Activated CD8-positive, alpha-beta memory T cell treated with anti-CD3 and anti-CD28 coated beads, Interleukin-2, amount 10 ng/mL, durations not matched to agents 7 days and 5 days (primary cell): ENCODE measurements at regions of chr15 and their contacts with region 1.

Region 1: DNA sequence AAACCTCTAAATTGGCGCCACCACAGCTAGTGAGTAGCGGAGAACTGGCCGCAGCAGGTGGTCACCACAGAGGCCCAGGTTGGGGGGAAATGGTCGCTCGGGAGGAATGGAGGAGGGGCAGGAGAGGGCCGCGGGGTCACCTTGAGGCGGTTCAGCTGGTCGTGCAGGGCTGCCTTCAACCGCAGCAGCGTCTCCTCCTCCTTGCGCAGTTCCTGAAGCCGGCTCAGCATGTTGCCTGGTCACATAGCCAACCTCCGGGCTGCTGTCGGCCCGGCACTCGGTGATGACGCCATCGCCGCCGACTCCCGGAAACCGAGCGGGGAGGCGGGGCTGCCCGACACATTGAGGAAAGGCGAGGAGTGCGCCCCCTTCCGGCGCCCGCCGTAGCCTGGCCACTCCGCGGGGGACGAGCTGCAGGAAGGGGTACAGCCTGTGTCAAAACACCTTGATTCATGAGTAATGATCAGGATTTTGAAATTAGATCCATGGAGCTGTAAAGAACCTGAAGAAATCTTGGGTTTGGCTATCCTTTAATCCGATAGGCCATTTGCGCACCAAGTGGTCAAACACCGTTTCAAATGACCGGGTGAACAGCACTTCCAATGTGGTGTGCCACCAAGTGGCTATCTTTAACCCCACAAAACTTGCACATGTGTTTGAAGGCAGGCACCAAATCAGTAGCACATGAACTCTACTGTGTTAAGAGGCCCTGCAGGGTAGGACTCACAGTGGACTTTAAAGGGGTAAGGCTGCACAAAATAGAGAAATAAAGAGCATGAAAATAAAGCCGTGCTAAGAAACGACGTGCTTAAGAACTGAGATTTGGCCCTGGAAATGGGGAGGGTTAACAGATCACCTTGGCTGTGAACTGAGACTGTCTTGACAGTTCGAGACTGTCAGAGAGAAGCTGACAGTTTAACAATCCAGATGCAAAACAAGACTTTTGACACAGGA is at the start of gene SNAPC5:
- DNase-seq: peak; percentile 99
- ATAC-seq: peak; percentile 93
- H3K4me3 Mint-ChIP-seq: peak within 1 kb of the TSS; percentile 85
- H3K27ac Mint-ChIP-seq: peak within 1 kb of the TSS; percentile 94
- H3K4me1 Mint-ChIP-seq: peaks cover 67% of the 10 kb centered on the region
- H3K27me3 Mint-ChIP-seq: no peaks in the 10 kb centered on the region
- total RNA-seq, gene SNAPC5: 29.3 to 30.0 TPM

Region 2: DNA sequence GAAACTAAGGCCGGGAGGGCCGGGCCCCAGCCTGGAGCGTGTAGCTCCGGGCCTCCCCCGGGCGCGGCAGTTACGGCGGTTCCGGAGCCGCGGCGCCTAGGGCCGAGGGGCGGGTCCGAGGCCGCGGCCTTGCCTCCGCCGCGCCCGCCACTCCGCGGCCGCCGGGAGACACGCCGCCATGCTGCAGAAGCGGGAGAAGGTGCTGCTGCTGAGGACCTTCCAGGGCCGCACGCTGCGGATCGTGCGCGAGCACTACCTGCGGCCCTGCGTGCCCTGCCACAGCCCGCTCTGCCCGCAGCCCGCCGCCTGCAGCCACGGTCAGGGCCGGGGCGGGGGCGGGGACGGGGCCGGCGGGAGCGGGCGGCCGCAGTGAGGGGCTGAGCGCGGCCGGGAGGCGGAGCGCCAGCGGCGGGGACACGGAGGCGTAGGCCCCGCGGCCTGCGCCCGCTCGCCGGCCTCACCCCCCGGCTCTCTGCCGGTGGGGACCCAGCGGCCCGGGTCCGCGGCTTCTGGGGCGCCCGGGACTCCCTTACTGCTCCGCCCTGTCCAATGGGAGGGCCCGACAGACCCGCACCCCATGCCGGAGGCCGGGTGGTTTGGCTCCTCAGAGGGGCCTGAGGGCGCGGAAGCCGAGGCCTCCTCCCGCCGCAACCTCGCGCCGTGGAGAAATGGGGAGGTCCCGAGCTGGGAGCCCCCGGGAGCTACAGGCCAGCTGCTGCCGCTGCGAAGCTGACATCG is 204.2 kb before region 1 on chr15 and contains the start of gene DIS3L:
- CTCF ChIA-PET with region 1: interaction called, 23 read pairs
- DNase-seq: peak; percentile 74
- ATAC-seq: peak; percentile 75
- H3K4me3 Mint-ChIP-seq: peak within 1 kb of the TSS; percentile 78
- H3K27ac Mint-ChIP-seq: peak within 1 kb of the TSS; percentile 89
- H3K4me1 Mint-ChIP-seq: peaks cover 39% of the 10 kb centered on the region
- H3K27me3 Mint-ChIP-seq: no peaks in the 10 kb centered on the region
- total RNA-seq, gene DIS3L: 20.7 to 22.9 TPM

Region 3: GRCh38 chr15:66369773-66370651 is 127.8 kb before region 1 on chr15:
- CTCF ChIA-PET with region 1: interaction called, 15 read pairs
- DNase-seq: peak; percentile 66
- ATAC-seq: peak; percentile 83
- H3K4me3 Mint-ChIP-seq: peak overlapping the region; percentile 53
- H3K27ac Mint-ChIP-seq: peak overlapping the region; percentile 83
- H3K4me1 Mint-ChIP-seq: peaks cover 19% of the 10 kb centered on the region
- H3K27me3 Mint-ChIP-seq: no peaks in the 10 kb centered on the region

Region 4: GRCh38 chr15:66394915-66395314 is 102.9 kb before region 1 on chr15:
- CTCF ChIA-PET with region 1: interaction called, 119 read pairs
- DNase-seq: no peak
- ATAC-seq: no peak
- H3K4me3 Mint-ChIP-seq: no peak overlapping the region
- H3K27ac Mint-ChIP-seq: peak overlapping the region; percentile 17
- H3K4me1 Mint-ChIP-seq: peaks cover 63% of the 10 kb centered on the region
- H3K27me3 Mint-ChIP-seq: no peaks in the 10 kb centered on the region

Region 5: GRCh38 chr15:66472176-66472999 is 25.4 kb before region 1 on chr15:
- CTCF ChIA-PET with region 1: interaction called, 13 read pairs
- DNase-seq: peak; percentile 75
- ATAC-seq: peak; percentile 96
- H3K4me3 Mint-ChIP-seq: peak overlapping the region; percentile 1
- H3K27ac Mint-ChIP-seq: peak overlapping the region; percentile 82
- H3K4me1 Mint-ChIP-seq: peaks cover 36% of the 10 kb centered on the region
- H3K27me3 Mint-ChIP-seq: no peaks in the 10 kb centered on the region